ENCODE measurements at regions of chr9 and their contacts with region 1.

Region 1: DNA sequence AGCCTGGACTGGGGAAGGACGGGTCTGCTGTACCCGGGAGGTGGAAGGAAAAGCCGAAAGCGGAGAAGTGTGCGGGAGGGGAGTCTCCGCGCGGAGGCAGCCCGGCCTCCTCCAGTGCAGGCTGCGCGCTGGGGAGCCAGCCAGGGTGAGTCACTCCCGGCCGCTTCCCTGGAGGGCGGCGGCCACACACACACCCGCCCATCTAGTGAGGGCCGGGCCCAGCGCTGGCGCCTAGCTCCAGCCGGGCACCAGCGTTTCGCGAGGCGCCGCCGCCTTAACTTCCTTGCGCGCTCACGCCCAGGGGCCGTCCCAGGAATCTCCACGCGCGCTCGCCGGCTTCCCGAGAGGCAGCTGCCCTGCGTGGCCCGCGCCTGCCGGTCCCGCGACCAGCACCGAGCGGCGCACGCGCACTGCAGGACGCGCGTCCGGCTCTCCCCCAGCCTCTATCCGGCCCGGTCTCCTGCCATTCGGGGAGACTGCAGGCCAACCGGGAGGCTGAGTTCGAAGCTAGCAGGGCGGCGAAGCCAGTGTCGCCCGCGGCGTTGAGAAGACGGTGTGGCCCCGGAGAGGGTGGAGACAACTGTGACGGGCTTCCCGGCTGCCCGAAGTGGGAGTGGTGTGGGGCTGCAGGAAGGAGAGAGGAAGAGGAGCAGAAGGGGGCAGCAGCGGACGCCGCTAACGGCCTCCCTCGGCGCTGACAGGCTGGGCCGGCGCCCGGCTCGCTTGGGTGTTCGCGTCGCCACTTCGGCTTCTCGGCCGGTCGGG is at the start of gene JAK2:
- DNase-seq: peak; percentile 91
- H3K4me3 Mint-ChIP-seq: peak within 1 kb of the TSS; percentile 90
- H3K27ac Mint-ChIP-seq: peak within 1 kb of the TSS; percentile 96
- H3K4me1 Mint-ChIP-seq: peaks cover 52% of the 10 kb centered on the region
- H3K27me3 Mint-ChIP-seq: no peaks in the 10 kb centered on the region
- total RNA-seq, gene JAK2: 23.2 to 25.5 TPM

Region 2: GRCh38 chr9:4740638-4741364 is 244.0 kb before region 1 on chr9 and contains the start of gene AK3:
- CTCF ChIA-PET with region 1: no interaction called
- POLR2A ChIA-PET with region 1: interaction called, 4 read pairs
- intact Hi-C with region 1: loop called (anchors 5 kb)
- DNase-seq: peak; percentile 90
- H3K4me3 Mint-ChIP-seq: peak within 1 kb of the TSS; percentile 83
- H3K27ac Mint-ChIP-seq: peak within 1 kb of the TSS; percentile 78
- H3K4me1 Mint-ChIP-seq: peaks cover 34% of the 10 kb centered on the region
- H3K27me3 Mint-ChIP-seq: no peaks in the 10 kb centered on the region
- total RNA-seq, gene AK3: 33.8 to 34.5 TPM

Region 3: DNA sequence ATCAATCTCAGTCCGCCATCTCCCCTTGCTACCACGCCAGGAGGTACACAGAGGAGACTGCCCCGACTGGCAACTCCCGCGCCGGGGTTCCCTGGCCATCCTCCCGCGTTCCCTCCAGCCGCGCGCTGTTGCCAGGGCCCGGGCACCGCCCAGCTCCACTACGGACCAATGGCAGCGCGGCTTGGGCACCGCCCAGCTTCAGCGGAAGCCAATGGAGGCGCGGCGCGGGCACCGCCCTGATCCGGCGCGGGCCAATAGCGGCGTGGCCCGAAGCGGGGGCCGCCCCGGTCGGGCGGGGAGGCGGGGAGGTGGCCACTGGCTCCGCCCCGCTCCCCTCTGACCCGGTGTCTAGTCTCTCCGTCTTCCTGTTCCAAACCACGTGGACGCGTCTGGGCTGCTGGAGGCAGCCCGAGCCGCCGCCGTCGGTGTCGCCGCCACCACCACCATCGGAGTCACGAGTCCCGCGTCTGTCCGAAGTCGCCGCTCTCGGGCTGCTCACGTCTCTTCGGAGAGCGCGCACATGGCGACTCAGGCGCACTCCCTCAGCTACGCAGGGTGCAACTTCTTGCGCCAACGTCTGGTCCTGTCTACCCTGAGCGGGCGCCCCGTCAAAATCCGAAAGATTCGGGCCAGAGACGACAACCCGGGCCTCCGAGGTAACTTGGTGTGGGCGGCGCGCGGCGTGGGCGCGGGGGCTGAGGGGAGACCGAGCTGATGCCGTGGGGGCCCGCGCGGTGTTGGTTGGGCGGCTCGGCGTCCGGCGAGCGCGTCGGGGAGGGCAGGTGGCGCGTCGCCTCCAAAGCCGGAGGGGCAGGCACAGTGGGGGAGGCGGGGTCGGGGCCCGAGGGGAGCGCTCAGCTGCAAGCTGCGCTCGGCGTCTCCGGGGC is 192.0 kb before region 1 on chr9 and contains the start of gene RCL1:
- CTCF ChIA-PET with region 1: interaction called, 23 read pairs
- POLR2A ChIA-PET with region 1: interaction called, 8 read pairs
- intact Hi-C with region 1: loop called (anchors 1 kb)
- DNase-seq: peak; percentile 98
- H3K4me3 Mint-ChIP-seq: peak within 1 kb of the TSS; percentile 93
- H3K27ac Mint-ChIP-seq: peak within 1 kb of the TSS; percentile 86
- H3K4me1 Mint-ChIP-seq: peaks cover 49% of the 10 kb centered on the region
- H3K27me3 Mint-ChIP-seq: no peaks in the 10 kb centered on the region
- total RNA-seq, gene RCL1: 26.0 to 28.2 TPM

Region 4: DNA sequence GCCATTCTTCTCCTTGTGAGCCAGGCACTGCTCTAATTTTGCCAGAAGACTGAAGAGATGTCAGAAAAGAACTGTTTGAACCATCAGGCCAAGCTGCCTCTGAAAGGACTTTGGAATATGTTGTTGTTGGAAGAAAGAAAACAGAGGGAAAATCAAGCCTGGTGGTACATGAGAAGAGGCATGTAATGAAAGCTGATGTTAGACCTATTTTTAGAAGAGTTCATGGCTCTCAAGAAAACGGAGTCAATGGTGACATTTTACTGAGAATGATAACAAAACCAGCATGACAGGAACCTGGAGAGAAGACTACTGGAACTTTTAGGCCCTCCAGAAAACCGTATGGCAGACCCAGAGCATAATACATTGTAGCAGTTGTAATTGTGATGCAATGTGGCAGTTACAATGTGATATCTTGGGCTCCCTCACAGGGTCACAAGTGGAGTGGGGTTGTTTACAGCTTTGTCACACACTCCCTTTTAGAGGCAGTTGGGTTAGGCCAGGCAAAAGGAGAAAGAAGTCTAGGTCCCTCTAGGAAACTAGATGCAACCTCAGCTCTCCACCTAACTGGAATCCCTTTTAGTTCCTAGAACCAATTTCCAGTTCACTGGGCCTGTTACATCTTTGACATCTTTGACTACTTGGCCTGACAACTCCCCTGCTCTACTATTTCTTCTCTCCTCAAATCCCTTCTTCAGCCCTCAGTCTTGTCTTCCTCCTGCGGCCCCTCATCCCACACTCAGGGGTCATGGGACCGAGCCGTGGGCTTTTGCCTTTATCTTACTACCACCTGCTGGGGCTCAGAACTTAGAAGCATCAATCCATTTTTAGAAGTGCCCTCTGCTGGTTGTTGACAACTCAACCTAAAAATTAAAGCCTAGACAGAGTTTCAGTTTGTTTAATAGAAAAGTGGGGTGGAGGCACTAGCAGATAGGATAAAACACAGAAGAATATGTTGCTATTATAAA is 60.9 kb before region 1 on chr9:
- CTCF ChIA-PET with region 1: interaction called, 5 read pairs
- POLR2A ChIA-PET with region 1: no interaction called
- intact Hi-C with region 1: loop called (anchors 2 kb)
- DNase-seq: no peak
- H3K4me3 Mint-ChIP-seq: no peak overlapping the region
- H3K27ac Mint-ChIP-seq: no peak overlapping the region
- H3K4me1 Mint-ChIP-seq: peaks cover 22% of the 10 kb centered on the region
- H3K27me3 Mint-ChIP-seq: no peaks in the 10 kb centered on the region

Region 5: DNA sequence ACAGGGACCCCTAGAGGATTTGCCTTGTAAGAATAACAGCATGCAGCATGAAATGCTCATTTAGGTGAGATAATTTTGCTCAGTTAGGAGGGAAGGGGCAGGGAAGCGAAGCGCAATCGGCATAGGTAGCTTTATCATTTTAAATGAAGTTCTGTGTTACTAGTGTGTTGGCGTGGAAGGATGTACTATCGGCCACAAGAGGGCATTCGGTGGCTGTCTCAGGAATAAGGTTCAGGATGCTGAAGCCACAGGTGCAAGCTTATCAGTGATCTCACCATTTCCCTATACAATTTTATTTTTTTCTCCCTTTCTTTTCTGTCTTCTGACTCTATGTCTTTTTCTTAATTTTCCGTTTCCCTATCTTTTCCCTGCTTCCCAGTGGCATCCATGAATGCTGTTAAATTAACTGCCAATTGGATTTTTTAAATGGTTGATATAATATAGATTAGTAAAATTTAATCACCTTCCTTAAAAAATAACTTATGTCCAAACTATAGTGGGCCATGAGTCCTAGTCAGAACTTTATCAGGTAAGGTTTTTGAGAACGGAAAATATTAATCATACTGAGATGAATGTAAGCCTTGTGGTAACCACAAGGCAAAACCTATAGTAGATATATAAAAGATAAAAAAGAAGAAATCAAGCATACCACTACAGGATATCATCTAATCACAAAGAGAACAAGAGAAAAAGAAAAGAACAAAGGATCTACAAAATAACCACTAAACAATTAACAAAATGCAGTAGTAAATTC is 201.8 kb after region 1 on chr9:
- CTCF ChIA-PET with region 1: no interaction called
- POLR2A ChIA-PET with region 1: no interaction called
- intact Hi-C with region 1: loop called (anchors 5 kb)
- DNase-seq: peak; percentile 74
- H3K4me3 Mint-ChIP-seq: no peak overlapping the region
- H3K27ac Mint-ChIP-seq: no peak overlapping the region
- H3K4me1 Mint-ChIP-seq: peaks cover 15% of the 10 kb centered on the region
- H3K27me3 Mint-ChIP-seq: no peaks in the 10 kb centered on the region

Region 6: DNA sequence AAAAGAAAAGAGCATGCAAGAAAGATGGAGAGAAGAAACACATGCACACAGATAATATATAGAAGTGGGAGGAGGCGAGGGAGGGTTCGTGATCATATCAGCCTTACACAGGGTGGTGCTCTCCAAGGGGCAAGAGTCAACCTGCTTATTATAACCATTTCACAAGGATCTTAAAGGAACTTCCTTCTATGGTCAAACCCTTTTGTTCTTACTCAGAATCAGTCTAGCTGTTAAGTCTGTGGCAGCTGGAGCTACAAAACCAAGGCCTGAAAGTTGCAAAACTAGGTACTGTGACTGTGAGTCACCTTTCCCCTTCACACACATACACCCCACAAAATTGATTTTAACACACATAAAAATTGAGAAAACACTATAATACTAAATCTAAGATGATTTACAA is 866.6 kb after region 1 on chr9:
- CTCF ChIA-PET with region 1: no interaction called
- POLR2A ChIA-PET with region 1: no interaction called
- intact Hi-C with region 1: loop called (anchors 10 kb)
- DNase-seq: peak; percentile 66
- H3K4me3 Mint-ChIP-seq: no peak overlapping the region
- H3K27ac Mint-ChIP-seq: peak overlapping the region; percentile 70
- H3K4me1 Mint-ChIP-seq: peaks cover 46% of the 10 kb centered on the region
- H3K27me3 Mint-ChIP-seq: no peaks in the 10 kb centered on the region

Measured in activated CD4-positive, alpha-beta memory T cell treated with anti-CD3 and anti-CD28 coated beads for 36 hours (primary cell).